CD8-positive, alpha-beta T cell (primary cell): ENCODE measurements at regions of chr17 and their contacts with region 1.

Region 1: DNA sequence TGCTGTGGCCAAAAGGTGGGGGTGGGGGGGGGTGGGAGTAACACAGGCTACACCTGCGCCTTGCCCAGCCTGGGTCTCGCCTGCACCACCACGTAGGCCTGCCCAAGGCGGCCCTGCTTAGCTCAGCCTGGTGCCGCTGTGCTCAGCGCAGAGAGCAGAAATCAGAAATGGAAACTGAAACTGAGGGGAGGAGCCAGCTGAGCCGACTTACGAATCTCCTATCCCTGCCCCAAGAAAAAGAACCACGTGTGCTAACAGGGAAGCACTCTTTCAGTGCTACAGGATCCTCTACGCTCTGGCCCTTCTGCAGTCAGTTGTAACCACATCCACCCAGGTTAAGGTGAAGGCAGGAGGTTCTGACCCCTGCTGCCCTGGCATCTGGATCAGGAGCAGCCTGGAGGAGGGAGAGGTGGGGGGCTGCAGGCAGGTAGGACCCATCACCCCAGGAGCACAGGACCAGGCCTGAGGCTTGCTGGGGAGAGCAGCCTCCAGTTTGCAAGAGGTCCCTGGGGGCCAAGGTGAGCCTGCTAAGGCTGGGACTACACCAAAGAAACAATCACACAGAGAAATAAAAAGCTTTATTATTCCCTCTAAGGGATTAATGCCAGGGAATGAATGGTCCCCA is at the start of gene DHX58:
- DNase-seq: peak; percentile 65 to 94 (median 81)
- ATAC-seq: peak; percentile 80
- H3K4me3 ChIP-seq: peak within 1 kb of the TSS; percentile 66 to 88
- H3K4me3 Mint-ChIP-seq: peak within 1 kb of the TSS; percentile 92
- H3K27ac ChIP-seq: peak within 1 kb of the TSS; percentile 81 to 90
- H3K27ac Mint-ChIP-seq: peak within 1 kb of the TSS; percentile 95
- H3K4me1 ChIP-seq: peaks cover 30% of the 10 kb centered on the region
- H3K4me1 Mint-ChIP-seq: peaks cover 49% of the 10 kb centered on the region
- H3K27me3 ChIP-seq: no peaks in the 10 kb centered on the region
- H3K27me3 Mint-ChIP-seq: no peaks in the 10 kb centered on the region
- CTCF ChIP-seq: no peak
- total RNA-seq, gene DHX58: 32.8 to 39.1 TPM

Region 2: DNA sequence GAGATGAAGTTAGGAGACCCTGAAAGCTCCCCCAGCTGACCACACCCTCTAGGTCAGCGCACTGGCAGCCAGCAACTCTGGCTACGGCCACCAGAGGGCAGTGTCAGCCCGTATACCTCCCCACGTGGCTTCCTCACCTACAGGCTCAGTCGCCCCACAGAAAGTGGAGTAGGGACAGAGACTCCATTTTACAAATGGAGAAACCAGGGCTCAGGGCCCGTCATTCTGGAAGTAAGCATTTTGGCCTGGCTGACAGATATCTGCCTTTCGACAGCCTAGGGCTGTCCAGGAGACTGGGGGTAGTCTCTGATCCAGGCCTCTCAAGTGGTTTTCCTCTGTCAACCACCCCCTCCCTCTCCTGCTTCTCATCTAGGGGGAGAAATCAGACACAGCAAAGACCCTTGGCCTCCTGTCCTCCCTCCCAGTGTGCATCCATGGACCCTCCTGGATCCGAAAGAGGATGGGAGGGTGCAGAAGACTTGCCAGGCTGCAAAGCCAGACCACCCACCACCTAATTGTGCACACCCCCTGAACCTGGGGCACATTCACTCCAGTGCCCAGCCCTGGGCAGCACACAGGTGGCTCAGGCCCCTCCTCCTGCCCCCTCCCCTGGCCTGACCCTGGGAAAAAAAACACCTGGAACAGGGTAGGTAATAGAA is 374.5 kb before region 1 on chr17:
- CTCF ChIA-PET with region 1: no interaction called
- POLR2A ChIA-PET with region 1: no interaction called
- intact Hi-C with region 1: loop called in 1 of 2 experiments (anchors 10 kb)
- DNase-seq: peak; percentile 57 to 87 (median 77)
- ATAC-seq: peak; percentile 97
- H3K4me3 ChIP-seq: no peak overlapping the region
- H3K4me3 Mint-ChIP-seq: no peak overlapping the region
- H3K27ac ChIP-seq: no peak overlapping the region
- H3K27ac Mint-ChIP-seq: no peak overlapping the region
- H3K4me1 ChIP-seq: peaks cover 10% of the 10 kb centered on the region
- H3K4me1 Mint-ChIP-seq: peaks cover 5% of the 10 kb centered on the region
- H3K27me3 ChIP-seq: peaks cover 9 to 31% of the 10 kb centered on the region in 2 experiments
- H3K27me3 Mint-ChIP-seq: peaks cover 27% of the 10 kb centered on the region
- CTCF ChIP-seq: peak; percentile 98

Region 3: GRCh38 chr17:41966463-41967140 is 146.1 kb before region 1 on chr17 and contains the start of gene CNP:
- CTCF ChIA-PET with region 1: interaction called, 120 read pairs
- POLR2A ChIA-PET with region 1: interaction called, 18 read pairs
- intact Hi-C with region 1: loop called (anchors 1 kb)
- DNase-seq: peak; percentile 77 to 95 (median 92)
- ATAC-seq: peak; percentile 88
- H3K4me3 ChIP-seq: peak within 1 kb of the TSS; percentile 75 to 89
- H3K4me3 Mint-ChIP-seq: peak within 1 kb of the TSS; percentile 83
- H3K27ac ChIP-seq: peak within 1 kb of the TSS; percentile 75 to 79
- H3K27ac Mint-ChIP-seq: peak within 1 kb of the TSS; percentile 94
- H3K4me1 ChIP-seq: peaks cover 33% of the 10 kb centered on the region
- H3K4me1 Mint-ChIP-seq: peaks cover 44% of the 10 kb centered on the region
- H3K27me3 ChIP-seq: no peaks in the 10 kb centered on the region
- H3K27me3 Mint-ChIP-seq: no peaks in the 10 kb centered on the region
- CTCF ChIP-seq: no peak
- total RNA-seq, gene CNP: 16.7 to 18.8 TPM

Region 4: GRCh38 chr17:42027961-42028790 is 84.5 kb before region 1 on chr17:
- CTCF ChIA-PET with region 1: interaction called, 256 read pairs
- POLR2A ChIA-PET with region 1: interaction called, 5 read pairs
- intact Hi-C with region 1: loop called (anchors 1 kb)
- DNase-seq: no peak
- ATAC-seq: no peak
- H3K4me3 ChIP-seq: no peak overlapping the region
- H3K4me3 Mint-ChIP-seq: no peak overlapping the region
- H3K27ac ChIP-seq: no peak overlapping the region
- H3K27ac Mint-ChIP-seq: no peak overlapping the region
- H3K4me1 ChIP-seq: peaks cover 6% of the 10 kb centered on the region
- H3K4me1 Mint-ChIP-seq: peaks cover 5% of the 10 kb centered on the region
- H3K27me3 ChIP-seq: peaks cover 0 to 5% of the 10 kb centered on the region in 2 experiments
- H3K27me3 Mint-ChIP-seq: peaks cover 10% of the 10 kb centered on the region
- CTCF ChIP-seq: no peak

Region 5: GRCh38 chr17:42101513-42102319 is 10.9 kb before region 1 on chr17:
- CTCF ChIA-PET with region 1: interaction called, 14 read pairs
- POLR2A ChIA-PET with region 1: interaction called, 3 read pairs
- intact Hi-C with region 1: no loop called
- DNase-seq: peak in 8 of 9 experiments; percentile 47 to 73 (median 66)
- ATAC-seq: peak; percentile 52
- H3K4me3 ChIP-seq: no peak overlapping the region
- H3K4me3 Mint-ChIP-seq: no peak overlapping the region
- H3K27ac ChIP-seq: no peak overlapping the region
- H3K27ac Mint-ChIP-seq: no peak overlapping the region
- H3K4me1 ChIP-seq: peaks cover 9% of the 10 kb centered on the region
- H3K4me1 Mint-ChIP-seq: peaks cover 8% of the 10 kb centered on the region
- H3K27me3 ChIP-seq: no peaks in the 10 kb centered on the region
- H3K27me3 Mint-ChIP-seq: peaks cover 5% of the 10 kb centered on the region
- CTCF ChIP-seq: peak; percentile 76